ENCODE measurements at regions of chr5 and their contacts with region 1.

Region 1: GRCh38 chr5:41716382-41716781 is 153.8 kb downstream of the OXCT1 start:
- DNase-seq: no peak
- CTCF ChIP-seq: no peak

Region 2: DNA sequence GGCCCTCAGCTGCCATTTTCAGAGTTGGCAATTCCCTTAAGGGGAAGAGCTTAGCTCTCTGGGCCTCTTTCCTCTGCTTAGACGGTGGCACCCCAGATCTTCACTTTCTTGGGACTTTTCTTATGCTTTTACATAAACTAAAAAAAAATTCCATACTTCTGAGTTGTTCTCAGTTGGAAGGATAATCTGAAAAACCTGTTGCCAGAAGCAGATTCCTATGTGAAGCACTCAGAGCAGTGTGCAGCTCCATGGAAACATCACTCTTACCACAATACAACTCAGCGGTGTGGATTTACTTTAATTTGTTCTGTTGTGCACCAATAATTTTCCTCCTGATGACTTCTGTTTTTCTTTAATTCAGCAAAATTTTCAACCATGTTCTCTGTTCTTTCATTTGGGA is 601.1 kb before region 1 on chr5:
- in situ Hi-C with region 1: no loop called
- DNase-seq: no peak
- CTCF ChIP-seq: no peak

Region 3: GRCh38 chr5:41835645-41836044 is 119.3 kb after region 1 on chr5:
- in situ Hi-C with region 1: loop called (anchors 10 kb)
- DNase-seq: no peak
- CTCF ChIP-seq: no peak